GM12878 (cell line): ENCODE measurements at regions of chr6 and their contacts with region 1.

Region 1: GRCh38 chr6:33147807-33148666 is 44.2 kb downstream of the COL11A2 start:
- DNase-seq: no peak
- ATAC-seq: no peak
- H3K4me3 ChIP-seq: no peak overlapping the region
- H3K27ac ChIP-seq: no peak overlapping the region
- H3K4me1 ChIP-seq: peaks cover 3% of the 10 kb centered on the region; the same call in 1 of the 2 replicates
- H3K27me3 ChIP-seq: peaks cover 0 to 2% of the 10 kb centered on the region in 2 experiments; a peak in 2 of 4 replicates
- CTCF ChIP-seq: peak; percentile 69 to 82 (median 81)
- EP300 ChIP-seq: no peak
- POLR2A ChIP-seq: no peak
- RAD21 ChIP-seq: peak; percentile 93

Region 2: GRCh38 chr6:33008944-33009861 is 138.8 kb before region 1 on chr6 and contains the start of gene HLA-DOA:
- CTCF ChIA-PET with region 1: interaction called, 16 read pairs
- POLR2A ChIA-PET with region 1: interaction called, 3 read pairs
- RAD21 ChIA-PET with region 1: interaction called, 20 read pairs
- SMC1A ChIA-PET with region 1: interaction called, 78 read pairs
- in situ Hi-C with region 1: no loop called
- intact Hi-C with region 1: no loop called
- DNase-seq: peak; percentile 75
- ATAC-seq: peak; percentile 98
- H3K4me3 ChIP-seq: peak within 1 kb of the TSS; percentile 100
- H3K27ac ChIP-seq: peak within 1 kb of the TSS; percentile 75
- H3K4me1 ChIP-seq: peaks cover 15% of the 10 kb centered on the region
- H3K27me3 ChIP-seq: no peaks in the 10 kb centered on the region
- CTCF ChIP-seq: no peak
- EP300 ChIP-seq: no peak
- POLR2A ChIP-seq: peak; percentile 93
- RAD21 ChIP-seq: no peak
- polyA plus RNA-seq, gene HLA-DOA: 8.8 to 21.1 TPM

Region 3: DNA sequence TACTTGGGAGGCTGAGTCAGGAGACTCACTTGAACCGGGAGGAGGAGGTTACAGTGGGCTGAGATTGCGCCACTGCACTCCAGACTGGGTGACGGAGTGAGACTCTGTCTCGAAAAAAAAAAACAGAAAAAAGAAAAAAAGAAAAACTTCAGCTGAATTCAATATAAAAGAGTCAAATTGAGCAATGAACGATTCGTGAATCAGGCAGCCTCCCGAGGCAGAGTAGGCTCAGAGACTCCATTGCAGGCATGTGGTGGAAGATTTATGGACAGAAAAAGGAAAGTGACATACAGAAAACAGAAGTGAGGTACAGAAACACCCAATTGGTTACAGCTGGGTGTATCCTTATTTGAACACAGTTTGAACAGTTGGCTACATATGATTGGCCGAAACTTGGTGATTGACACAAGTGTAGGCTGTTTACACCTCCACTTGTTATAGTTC is 15.9 kb before region 1 on chr6:
- CTCF ChIA-PET with region 1: interaction called, 266 read pairs
- POLR2A ChIA-PET with region 1: interaction called, 3 read pairs
- RAD21 ChIA-PET with region 1: interaction called, 18 read pairs
- SMC1A ChIA-PET with region 1: interaction called, 55 read pairs
- in situ Hi-C with region 1: no loop called
- intact Hi-C with region 1: no loop called
- DNase-seq: no peak
- ATAC-seq: peak; percentile 35; the same call in 1 of the 3 replicates
- H3K4me3 ChIP-seq: no peak overlapping the region
- H3K27ac ChIP-seq: no peak overlapping the region
- H3K4me1 ChIP-seq: peaks cover 14% of the 10 kb centered on the region
- H3K27me3 ChIP-seq: no peaks in the 10 kb centered on the region
- CTCF ChIP-seq: no peak
- EP300 ChIP-seq: no peak
- POLR2A ChIP-seq: no peak
- RAD21 ChIP-seq: no peak

Region 4: DNA sequence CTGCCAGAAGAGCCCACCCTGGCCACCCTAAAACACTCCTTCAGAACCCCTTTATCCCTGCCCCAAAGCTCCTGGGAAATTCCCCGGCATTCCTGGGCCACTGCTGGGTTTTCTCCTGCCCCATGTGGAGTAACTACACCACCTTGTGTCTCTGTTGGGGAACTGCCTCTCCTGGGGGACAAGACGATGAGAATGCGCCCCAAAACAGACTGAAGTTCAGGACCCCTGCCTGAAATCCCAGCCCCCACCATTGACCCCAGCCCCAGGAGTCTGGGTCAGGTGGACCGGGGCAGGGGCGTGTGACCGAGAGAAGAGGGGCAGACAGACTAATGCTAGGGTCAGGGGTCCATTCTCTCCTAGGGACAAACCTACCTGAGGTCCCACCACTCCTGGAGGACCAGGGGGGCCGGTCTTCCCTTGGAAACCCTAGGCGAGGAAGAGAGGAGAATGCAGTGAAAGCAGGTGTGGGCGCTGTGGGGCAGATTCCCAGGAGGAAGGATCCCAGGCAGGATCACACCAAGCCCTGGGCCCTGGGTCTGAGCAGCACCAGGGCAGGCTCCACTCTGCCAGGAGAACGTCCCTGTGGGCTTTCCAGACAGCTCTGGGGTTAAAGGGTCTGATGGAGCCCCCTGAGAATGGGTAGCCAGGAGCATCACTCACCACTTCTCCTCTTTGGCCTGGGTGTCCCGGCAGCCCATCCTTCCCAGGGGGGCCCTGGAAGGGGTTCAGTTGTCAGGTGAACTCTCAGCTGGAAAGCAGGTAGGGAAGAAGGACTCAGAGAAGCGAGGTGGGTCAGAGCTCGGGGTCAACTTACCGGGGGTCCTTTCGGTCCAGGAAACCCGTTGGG is 24.9 kb after region 1 on chr6:
- CTCF ChIA-PET with region 1: interaction called, 24 read pairs
- POLR2A ChIA-PET with region 1: no interaction called
- RAD21 ChIA-PET with region 1: interaction called, 20 read pairs
- SMC1A ChIA-PET with region 1: interaction called, 8 read pairs
- in situ Hi-C with region 1: no loop called
- intact Hi-C with region 1: no loop called
- DNase-seq: no peak
- ATAC-seq: peak; percentile 39
- H3K4me3 ChIP-seq: no peak overlapping the region
- H3K27ac ChIP-seq: no peak overlapping the region
- H3K4me1 ChIP-seq: no peaks in the 10 kb centered on the region; the same call in 1 of the 2 replicates
- H3K27me3 ChIP-seq: no peaks in the 10 kb centered on the region
- CTCF ChIP-seq: peak; percentile 80 to 83 (median 83)
- EP300 ChIP-seq: no peak
- POLR2A ChIP-seq: no peak
- RAD21 ChIP-seq: peak; percentile 96

Region 5: GRCh38 chr6:34176261-34177031 is 1028.4 kb after region 1 on chr6:
- CTCF ChIA-PET with region 1: no interaction called
- POLR2A ChIA-PET with region 1: no interaction called
- RAD21 ChIA-PET with region 1: no interaction called
- SMC1A ChIA-PET with region 1: no interaction called
- in situ Hi-C with region 1: no loop called
- intact Hi-C with region 1: no loop called
- DNase-seq: no peak
- ATAC-seq: no peak
- H3K4me3 ChIP-seq: no peak overlapping the region
- H3K27ac ChIP-seq: no peak overlapping the region
- H3K4me1 ChIP-seq: no peaks in the 10 kb centered on the region
- H3K27me3 ChIP-seq: no peaks in the 10 kb centered on the region
- CTCF ChIP-seq: no peak
- EP300 ChIP-seq: no peak
- POLR2A ChIP-seq: no peak
- RAD21 ChIP-seq: no peak